ENCODE measurements at regions of chr3 and their contacts with region 1.

Region 1: GRCh38 chr3:32334675-32335074 is 57.0 kb upstream of the CMTM7 start:
- DNase-seq: peak; percentile 64
- ATAC-seq: peak; percentile 82
- H3K4me3 Mint-ChIP-seq: no peak overlapping the region
- H3K27ac Mint-ChIP-seq: no peak overlapping the region
- H3K4me1 Mint-ChIP-seq: peaks cover 13% of the 10 kb centered on the region
- H3K27me3 Mint-ChIP-seq: no peaks in the 10 kb centered on the region

Region 2: DNA sequence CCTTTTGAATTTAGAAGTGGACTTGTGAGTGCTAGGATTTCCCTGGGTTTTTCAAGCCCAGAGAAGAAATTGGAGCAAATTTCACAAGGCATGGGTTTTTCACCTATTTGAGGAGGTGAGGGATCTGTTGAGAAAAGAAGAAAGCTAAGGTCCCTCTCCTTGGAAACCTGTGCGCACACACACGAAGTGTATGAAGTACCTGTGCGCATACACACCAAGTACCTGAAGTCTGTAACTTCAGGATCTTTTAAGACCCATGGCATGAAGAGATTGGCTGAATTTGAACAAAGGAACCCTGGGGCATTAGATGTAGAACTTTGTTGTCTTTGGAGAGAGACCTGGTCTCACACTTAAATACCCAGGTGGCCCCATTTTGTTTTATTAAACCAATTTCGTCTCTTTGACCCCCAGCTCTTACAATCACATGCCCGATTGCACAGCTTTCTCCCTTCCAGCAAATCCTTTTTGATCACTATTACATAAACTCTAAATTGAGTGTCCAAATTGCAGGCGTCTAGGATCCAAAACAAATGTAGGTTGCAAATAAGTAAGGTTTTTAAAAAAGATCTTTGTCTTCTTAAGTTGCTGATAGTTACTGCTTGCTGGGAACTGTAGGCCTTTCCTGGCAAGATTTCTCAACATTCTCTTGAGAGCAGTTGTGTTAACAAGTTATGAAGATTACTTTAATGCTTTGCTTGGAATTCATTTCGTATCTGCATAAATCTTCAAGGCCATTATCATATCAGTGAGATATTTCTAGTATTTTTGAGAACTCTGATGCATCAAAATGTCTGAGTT is 31.9 kb before region 1 on chr3:
- CTCF ChIA-PET with region 1: interaction called, 26 read pairs
- DNase-seq: no peak
- ATAC-seq: peak; percentile 30
- H3K4me3 Mint-ChIP-seq: peak overlapping the region; percentile 58
- H3K27ac Mint-ChIP-seq: peak overlapping the region; percentile 86
- H3K4me1 Mint-ChIP-seq: peaks cover 23% of the 10 kb centered on the region
- H3K27me3 Mint-ChIP-seq: no peaks in the 10 kb centered on the region

Region 3: DNA sequence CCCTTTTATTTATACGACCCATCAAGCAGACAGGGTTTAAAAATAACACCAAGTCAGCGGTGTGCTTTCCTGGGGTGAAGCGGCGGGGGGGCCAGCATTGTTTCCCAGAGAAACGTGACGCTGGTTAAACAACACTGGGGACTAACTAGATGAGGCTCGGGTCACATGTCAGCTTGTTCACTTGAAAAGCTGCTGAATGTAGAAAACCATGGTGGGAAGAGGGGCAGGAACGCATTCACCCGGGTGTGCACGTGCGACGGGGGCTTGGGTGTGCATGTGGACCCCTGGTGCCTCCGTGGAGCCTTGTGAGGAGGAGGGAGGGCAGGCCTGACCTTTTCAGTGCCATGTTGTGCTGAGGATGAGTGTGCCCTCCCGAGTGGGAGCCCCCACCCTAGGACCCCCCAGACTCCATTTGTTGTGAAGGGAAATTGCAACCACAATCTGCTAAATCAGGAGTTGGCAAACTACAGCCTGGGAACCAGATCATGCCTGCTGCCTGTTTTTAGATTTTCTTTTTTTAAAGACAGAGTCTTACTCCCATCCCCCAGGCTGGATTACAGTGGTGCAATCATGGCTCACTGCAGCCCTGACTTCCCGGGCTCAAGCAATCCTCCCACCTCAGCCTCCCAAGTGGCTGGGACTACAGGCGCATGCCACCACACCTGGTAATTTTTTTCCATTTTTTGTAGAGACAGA is 13.4 kb before region 1 on chr3:
- CTCF ChIA-PET with region 1: no interaction called
- DNase-seq: no peak
- ATAC-seq: no peak
- H3K4me3 Mint-ChIP-seq: no peak overlapping the region
- H3K27ac Mint-ChIP-seq: no peak overlapping the region
- H3K4me1 Mint-ChIP-seq: no peaks in the 10 kb centered on the region
- H3K27me3 Mint-ChIP-seq: peaks cover 3% of the 10 kb centered on the region